Common myeloid progenitor, CD34-positive (primary cell): ENCODE measurements at regions of chr1 and their contacts with region 1.

Region 1: GRCh38 chr1:110011527-110012041 is 22.8 kb upstream of the STRIP1 start:
- DNase-seq: peak; percentile 65 to 82 (median 78)
- H3K4me3 ChIP-seq: no peak overlapping the region
- H3K27ac ChIP-seq: no peak overlapping the region
- H3K4me1 ChIP-seq: no peaks in the 10 kb centered on the region
- H3K27me3 ChIP-seq: no peaks in the 10 kb centered on the region

Region 2: GRCh38 chr1:109993885-109994284 is 17.7 kb before region 1 on chr1:
- CTCF ChIA-PET with region 1: interaction called, 21 read pairs
- POLR2A ChIA-PET with region 1: interaction called, 3 read pairs
- DNase-seq: peak in 1 of 3 donors; percentile 14
- H3K4me3 ChIP-seq: no peak overlapping the region
- H3K27ac ChIP-seq: no peak overlapping the region
- H3K4me1 ChIP-seq: peaks cover 0 to 7% (median 4%) of the 10 kb centered on the region in 4 experiments
- H3K27me3 ChIP-seq: no peaks in the 10 kb centered on the region

Region 3: DNA sequence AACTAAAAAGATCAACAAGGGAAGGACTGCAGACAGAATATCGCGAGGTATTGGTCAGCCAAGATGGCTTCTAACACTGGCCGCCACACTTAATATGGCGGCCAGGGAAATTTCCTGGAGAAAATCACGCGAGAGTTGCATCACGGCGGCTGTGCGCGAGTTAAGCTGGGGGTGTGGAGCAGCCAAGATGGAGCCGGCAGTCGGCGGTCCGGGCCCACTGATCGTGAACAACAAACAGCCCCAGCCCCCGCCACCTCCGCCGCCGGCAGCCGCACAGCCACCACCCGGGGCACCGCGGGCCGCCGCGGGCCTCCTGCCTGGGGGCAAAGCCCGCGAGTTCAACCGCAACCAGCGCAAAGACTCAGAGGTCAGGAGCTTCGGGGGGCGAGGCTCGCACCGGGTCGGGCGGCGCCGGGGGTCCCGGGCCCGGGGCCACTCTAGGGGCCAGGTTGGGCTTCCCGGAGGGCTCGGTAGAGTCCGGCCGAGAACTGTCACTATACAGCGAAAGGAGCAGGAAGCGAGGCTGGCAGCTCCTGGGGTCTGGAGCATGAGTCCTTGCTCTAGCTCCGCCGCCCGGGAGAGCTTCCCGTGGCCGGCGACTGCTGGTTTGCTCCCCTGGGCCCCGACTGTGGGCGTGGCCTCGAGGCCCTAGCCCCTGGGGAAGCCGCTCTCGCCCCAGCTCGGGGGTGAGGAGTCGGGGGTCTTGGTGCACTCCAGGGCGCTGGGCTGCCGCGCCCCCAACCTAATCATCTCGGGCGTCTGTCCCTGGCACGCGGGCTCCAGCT is 23.1 kb after region 1 on chr1 and contains the start of gene STRIP1:
- CTCF ChIA-PET with region 1: interaction called, 11 read pairs
- POLR2A ChIA-PET with region 1: no interaction called
- DNase-seq: peak; percentile 98
- H3K4me3 ChIP-seq: peak within 1 kb of the TSS; percentile 69 to 96 (median 87)
- H3K27ac ChIP-seq: peak within 1 kb of the TSS; percentile 87 to 96
- H3K4me1 ChIP-seq: peaks cover 15 to 30% (median 18%) of the 10 kb centered on the region in 4 experiments
- H3K27me3 ChIP-seq: no peaks in the 10 kb centered on the region